IMR-90 (cell line): ENCODE measurements at regions of chr16 and their contacts with region 1.

Region 1: DNA sequence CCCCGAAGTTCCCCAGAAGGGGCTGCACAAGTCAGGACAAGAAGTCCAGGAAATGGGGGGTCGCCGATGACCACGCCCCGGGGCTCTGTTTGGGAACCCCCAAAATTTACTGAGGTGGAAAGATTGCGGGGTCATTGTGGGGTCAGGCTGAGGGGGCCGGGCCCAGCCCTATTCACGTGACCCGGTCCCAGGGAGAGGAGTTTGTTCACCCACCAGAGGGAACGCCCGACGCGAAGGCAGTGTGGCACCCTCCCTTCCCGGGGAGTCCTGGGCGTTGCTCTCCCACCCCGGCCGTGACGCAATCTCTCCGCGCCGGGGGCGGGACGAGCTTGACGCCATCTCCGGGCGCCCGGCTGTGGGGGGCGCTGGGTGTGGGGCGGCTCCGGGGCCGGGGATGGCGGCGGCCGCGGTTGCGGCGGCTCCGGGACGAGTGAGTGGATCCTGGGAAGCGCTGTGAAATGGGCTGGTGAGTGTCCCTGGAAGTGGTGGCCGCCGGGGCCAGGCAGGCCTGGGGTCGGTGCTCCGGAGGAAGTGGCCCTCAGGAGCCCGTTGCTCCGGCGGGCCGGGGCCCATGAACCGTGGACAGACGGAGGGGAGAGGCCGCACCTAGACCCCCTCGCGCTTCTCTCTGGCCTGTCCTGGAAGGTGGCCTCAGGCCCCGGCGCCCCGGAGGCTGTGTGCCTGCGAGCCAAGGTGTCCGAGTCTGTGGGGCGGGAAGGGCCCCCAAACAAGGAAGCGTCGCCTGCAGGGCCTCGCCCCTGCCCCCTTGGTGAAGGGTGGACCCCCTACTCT is at the start of gene ATXN1L:
- DNase-seq: peak; percentile 88
- ATAC-seq: peak; percentile 98
- H3K4me3 ChIP-seq: peak within 1 kb of the TSS; percentile 97
- H3K27ac ChIP-seq: peak within 1 kb of the TSS; percentile 81
- H3K4me1 ChIP-seq: peaks cover 3% of the 10 kb centered on the region; the same call in 1 of the 2 replicates
- H3K27me3 ChIP-seq: no peaks in the 10 kb centered on the region
- CTCF ChIP-seq: no peak; the same call in 1 of the 2 replicates
- POLR2A ChIP-seq: peak; percentile 90
- RAD21 ChIP-seq: no peak
- total RNA-seq, gene ATXN1L: 5.2 and 5.8 TPM in 2 replicates

Region 2: DNA sequence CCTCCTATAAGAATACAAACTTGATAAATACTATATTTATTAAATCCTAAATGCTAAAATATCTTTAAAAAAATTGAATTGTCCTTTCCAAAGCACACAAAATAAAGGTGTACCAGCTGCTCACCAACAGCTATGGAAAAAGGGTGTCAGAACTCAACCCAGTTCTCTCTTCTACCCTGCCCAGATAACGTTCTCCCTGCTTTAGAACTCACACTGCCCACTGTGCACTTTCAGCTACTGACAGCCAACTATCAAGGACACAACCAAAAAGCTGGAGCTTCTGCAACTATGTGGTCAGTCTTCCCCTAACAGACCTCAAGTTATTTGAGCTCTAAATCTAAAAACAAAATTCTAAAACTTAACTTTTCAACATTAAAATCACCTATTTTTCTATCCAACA is 50.9 kb before region 1 on chr16:
- CTCF ChIA-PET with region 1: no interaction called
- POLR2A ChIA-PET with region 1: no interaction called
- dilution Hi-C with region 1: no loop called
- in situ Hi-C with region 1: no loop called
- intact Hi-C with region 1: loop called (anchors 2 kb)
- DNase-seq: no peak
- ATAC-seq: no peak
- H3K4me3 ChIP-seq: no peak overlapping the region
- H3K27ac ChIP-seq: peak overlapping the region; percentile 22; the same call in 1 of the 2 replicates
- H3K4me1 ChIP-seq: peaks cover 7% of the 10 kb centered on the region
- H3K27me3 ChIP-seq: no peaks in the 10 kb centered on the region
- CTCF ChIP-seq: no peak
- POLR2A ChIP-seq: no peak
- RAD21 ChIP-seq: no peak